K562 (cell line): ENCODE measurements at regions of chr12 and their contacts with region 1.

Region 1: GRCh38 chr12:120428597-120429229 is 9.2 kb upstream of the COX6A1 start:
- DNase-seq: no peak
- ATAC-seq: no peak
- H3K4me3 ChIP-seq: no peak overlapping the region
- H3K27ac ChIP-seq: no peak overlapping the region
- H3K4me1 ChIP-seq: peaks cover 0 to 5% of the 10 kb centered on the region in 2 experiments; a peak in 2 of 5 replicates
- H3K27me3 ChIP-seq: peaks cover 5 to 15% of the 10 kb centered on the region in 2 experiments; a peak in 3 of 5 replicates
- CTCF ChIP-seq: no peak
- EP300 ChIP-seq: no peak
- POLR2A ChIP-seq: no peak
- RAD21 ChIP-seq: no peak

Region 2: DNA sequence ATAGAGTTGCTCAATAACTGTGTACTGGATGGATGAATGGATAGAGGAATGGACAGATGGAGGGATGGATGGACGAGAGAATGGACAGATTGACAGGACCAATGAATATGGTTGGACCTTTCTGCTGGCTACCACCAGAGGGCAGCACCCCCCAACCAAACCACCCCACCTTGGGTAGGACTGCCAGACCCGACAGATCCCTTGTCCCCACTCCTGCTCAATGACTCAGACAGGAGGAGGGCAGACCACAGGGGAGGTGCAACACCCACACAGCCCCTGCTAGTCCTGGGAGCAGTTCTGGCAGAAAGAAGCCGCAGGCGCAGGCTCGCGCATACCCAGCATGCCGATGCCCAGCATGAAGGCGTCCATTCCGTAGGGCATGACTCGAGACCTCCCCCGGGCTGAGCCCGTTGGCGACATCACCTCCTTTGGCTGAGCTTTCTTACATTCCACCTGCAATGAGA is 72.1 kb before region 1 on chr12:
- CTCF ChIA-PET with region 1: interaction called, 42 read pairs
- POLR2A ChIA-PET with region 1: no interaction called
- in situ Hi-C with region 1: loop called (anchors 5 kb)
- intact Hi-C with region 1: loop called (anchors 1 kb)
- DNase-seq: peak; percentile 89 to 96 (median 95)
- ATAC-seq: peak; percentile 97
- H3K4me3 ChIP-seq: no peak overlapping the region
- H3K27ac ChIP-seq: no peak overlapping the region
- H3K4me1 ChIP-seq: peaks cover 0 to 19% of the 10 kb centered on the region in 2 experiments; a peak in 3 of 5 replicates
- H3K27me3 ChIP-seq: peaks cover 15 to 45% of the 10 kb centered on the region in 2 experiments; a peak in 4 of 5 replicates
- CTCF ChIP-seq: peak; percentile 90 to 96 (median 95)
- EP300 ChIP-seq: 0 out of 2 replicates have a peak, but pooled peaks have one; percentile 21
- POLR2A ChIP-seq: no peak
- RAD21 ChIP-seq: peak; percentile 90 to 98

Region 3: GRCh38 chr12:120367233-120367923 is 61.3 kb before region 1 on chr12:
- CTCF ChIA-PET with region 1: no interaction called
- POLR2A ChIA-PET with region 1: interaction called, 10 read pairs
- in situ Hi-C with region 1: no loop called
- intact Hi-C with region 1: no loop called
- DNase-seq: peak; percentile 37 to 54 (median 44)
- ATAC-seq: peak; percentile 72
- H3K4me3 ChIP-seq: no peak overlapping the region
- H3K27ac ChIP-seq: no peak overlapping the region
- H3K4me1 ChIP-seq: peaks cover 0 to 19% of the 10 kb centered on the region in 2 experiments; a peak in 2 of 5 replicates
- H3K27me3 ChIP-seq: peaks cover 50 to 77% of the 10 kb centered on the region in 2 experiments
- CTCF ChIP-seq: peak; percentile 47 to 68 (median 47)
- EP300 ChIP-seq: no peak
- POLR2A ChIP-seq: no peak
- RAD21 ChIP-seq: no peak

Region 4: DNA sequence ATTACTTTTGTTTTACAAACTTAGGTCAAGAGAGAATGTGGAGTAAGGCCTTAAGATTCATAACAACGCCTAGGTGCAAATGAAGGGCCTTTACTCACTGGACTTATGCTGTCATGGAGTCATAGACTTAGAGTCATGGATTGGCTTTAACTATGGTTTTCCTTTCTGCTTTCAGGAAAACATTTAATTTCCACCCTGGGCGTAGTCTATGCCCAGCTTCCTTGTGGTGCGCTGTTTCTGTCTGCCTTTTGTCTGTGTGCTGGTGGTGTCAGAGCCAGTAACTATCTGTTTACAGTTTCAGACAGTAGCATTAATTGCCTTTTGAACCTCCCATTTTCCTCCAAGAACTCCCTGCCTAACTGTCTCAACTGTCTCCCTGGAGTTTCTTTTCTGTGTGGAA is 22.6 kb before region 1 on chr12:
- CTCF ChIA-PET with region 1: no interaction called
- POLR2A ChIA-PET with region 1: no interaction called
- in situ Hi-C with region 1: no loop called
- intact Hi-C with region 1: no loop called
- DNase-seq: no peak
- ATAC-seq: no peak
- H3K4me3 ChIP-seq: no peak overlapping the region
- H3K27ac ChIP-seq: no peak overlapping the region
- H3K4me1 ChIP-seq: no peaks in the 10 kb centered on the region; a peak in 1 of 5 replicates
- H3K27me3 ChIP-seq: peaks cover 0 to 13% of the 10 kb centered on the region in 2 experiments; a peak in 2 of 5 replicates
- CTCF ChIP-seq: no peak
- EP300 ChIP-seq: no peak
- POLR2A ChIP-seq: no peak
- RAD21 ChIP-seq: no peak

Region 5: GRCh38 chr12:120528861-120529525 is 100.3 kb after region 1 on chr12 and contains the start of gene COQ5:
- CTCF ChIA-PET with region 1: no interaction called
- POLR2A ChIA-PET with region 1: no interaction called
- in situ Hi-C with region 1: no loop called
- intact Hi-C with region 1: no loop called
- DNase-seq: peak; percentile 76 to 92 (median 80)
- ATAC-seq: peak; percentile 95
- H3K4me3 ChIP-seq: peak within 1 kb of the TSS; percentile 69
- H3K27ac ChIP-seq: peak within 1 kb of the TSS; percentile 95
- H3K4me1 ChIP-seq: peaks cover 4 to 9% of the 10 kb centered on the region in 2 experiments; a peak in 4 of 5 replicates
- H3K27me3 ChIP-seq: no peaks in the 10 kb centered on the region
- CTCF ChIP-seq: no peak
- EP300 ChIP-seq: peak; percentile 64
- POLR2A ChIP-seq: peak; percentile 98
- RAD21 ChIP-seq: no peak
- polyA plus RNA-seq, gene COQ5: 19.2 to 26.2 TPM

Region 6: DNA sequence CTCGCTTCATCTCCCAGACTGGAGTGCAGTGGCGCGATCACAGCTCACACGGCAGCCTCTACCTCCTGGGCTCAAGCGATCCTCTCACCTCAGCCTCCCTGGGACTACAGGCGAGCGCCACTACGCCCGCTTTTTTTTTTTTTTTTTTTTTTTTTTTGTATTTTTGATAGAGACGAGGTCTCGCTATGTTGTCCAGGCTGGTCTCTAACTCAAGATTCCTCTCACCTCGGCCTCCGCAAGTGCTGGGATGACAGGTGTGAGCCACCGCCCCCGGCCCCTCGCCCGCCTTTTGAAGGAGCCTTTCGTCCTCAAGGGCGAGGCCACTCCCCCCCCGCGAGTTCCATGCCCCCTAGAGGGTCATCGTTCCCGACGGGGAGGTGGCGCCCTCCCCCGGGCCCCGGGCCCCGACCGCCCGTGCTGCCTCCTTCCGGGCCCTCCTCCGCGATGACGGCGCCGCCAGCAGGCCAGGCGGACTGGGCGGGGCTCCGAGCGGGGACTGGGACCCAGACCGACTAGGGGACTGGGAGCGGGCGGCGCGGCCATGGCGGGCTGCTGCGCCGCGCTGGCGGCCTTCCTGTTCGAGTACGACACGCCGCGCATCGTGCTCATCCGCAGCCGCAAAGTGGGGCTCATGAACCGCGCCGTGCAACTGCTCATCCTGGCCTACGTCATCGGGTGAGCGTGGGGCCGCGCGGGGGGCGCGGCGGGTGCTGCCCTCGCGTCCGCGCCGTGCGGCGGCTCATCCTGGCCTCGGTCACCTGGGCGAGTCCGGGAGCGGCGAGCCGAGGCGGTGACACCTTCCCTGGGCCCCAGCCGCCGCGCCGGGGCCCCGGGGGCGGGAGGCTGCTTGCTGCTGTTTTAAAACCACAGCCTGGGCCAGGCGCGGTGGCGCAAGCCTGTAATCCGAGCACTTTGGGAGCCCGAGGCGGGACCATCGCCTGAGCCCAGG is 781.2 kb after region 1 on chr12 and contains the start of gene P2RX4:
- CTCF ChIA-PET with region 1: no interaction called
- POLR2A ChIA-PET with region 1: no interaction called
- in situ Hi-C with region 1: no loop called
- intact Hi-C with region 1: no loop called
- DNase-seq: peak; percentile 92 to 97 (median 96)
- ATAC-seq: peak; percentile 99
- H3K4me3 ChIP-seq: peak within 1 kb of the TSS; percentile 91
- H3K27ac ChIP-seq: peak within 1 kb of the TSS; percentile 89
- H3K4me1 ChIP-seq: peaks cover 11 to 24% of the 10 kb centered on the region in 2 experiments; a peak in 4 of 5 replicates
- H3K27me3 ChIP-seq: no peaks in the 10 kb centered on the region
- CTCF ChIP-seq: peak; percentile 45 to 95 (median 78); a peak in 5 of 6 replicates
- EP300 ChIP-seq: no peak
- POLR2A ChIP-seq: peak; percentile 92
- RAD21 ChIP-seq: peak; percentile 75 to 77
- polyA plus RNA-seq, gene P2RX4: 6.6 to 10.0 TPM